ENCODE measurements at regions of chr3 and their contacts with region 1.

Region 1: DNA sequence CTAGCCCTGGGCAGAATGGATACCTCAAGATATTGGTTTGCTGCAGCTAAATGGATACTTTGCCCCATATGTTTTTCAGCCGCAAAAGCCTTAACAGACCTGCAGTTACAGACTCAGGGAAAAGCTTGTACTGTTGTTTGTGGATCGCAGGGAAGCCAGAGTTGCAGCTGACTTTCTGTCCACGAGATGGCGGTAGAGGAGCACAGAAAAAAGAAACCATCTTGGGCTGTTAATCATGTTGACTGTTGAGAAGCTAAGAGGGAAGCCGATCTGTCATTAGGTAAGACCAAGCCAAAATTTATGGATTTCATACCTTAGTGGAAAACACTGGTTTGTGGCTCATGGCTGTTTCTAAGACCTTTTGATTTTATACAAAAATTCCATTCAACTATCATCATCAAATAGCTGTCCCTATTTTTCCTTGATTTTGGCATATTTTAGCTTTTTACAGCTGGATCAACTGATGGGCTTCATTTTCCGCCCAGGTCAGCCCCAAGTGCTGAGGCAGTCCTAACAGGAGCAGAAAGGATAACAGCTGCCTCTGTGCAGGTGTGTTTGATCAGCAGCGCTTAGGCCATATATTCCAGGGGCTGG is 205.7 kb upstream of the ZPLD1 start:
- DNase-seq: peak; percentile 81
- ATAC-seq: peak; percentile 73
- H3K4me3 Mint-ChIP-seq: no peak overlapping the region
- H3K27ac Mint-ChIP-seq: no peak overlapping the region
- H3K4me1 Mint-ChIP-seq: peaks cover 14% of the 10 kb centered on the region
- H3K27me3 Mint-ChIP-seq: peaks cover 18% of the 10 kb centered on the region

Region 2: GRCh38 chr3:101803173-101803782 is 425.9 kb before region 1 on chr3:
- CTCF ChIA-PET with region 1: interaction called, 230 read pairs
- POLR2A ChIA-PET with region 1: interaction called, 3 read pairs
- DNase-seq: peak; percentile 82
- ATAC-seq: peak; percentile 99
- H3K4me3 Mint-ChIP-seq: no peak overlapping the region
- H3K27ac Mint-ChIP-seq: peak overlapping the region; percentile 39
- H3K4me1 Mint-ChIP-seq: peaks cover 11% of the 10 kb centered on the region
- H3K27me3 Mint-ChIP-seq: no peaks in the 10 kb centered on the region

Region 3: DNA sequence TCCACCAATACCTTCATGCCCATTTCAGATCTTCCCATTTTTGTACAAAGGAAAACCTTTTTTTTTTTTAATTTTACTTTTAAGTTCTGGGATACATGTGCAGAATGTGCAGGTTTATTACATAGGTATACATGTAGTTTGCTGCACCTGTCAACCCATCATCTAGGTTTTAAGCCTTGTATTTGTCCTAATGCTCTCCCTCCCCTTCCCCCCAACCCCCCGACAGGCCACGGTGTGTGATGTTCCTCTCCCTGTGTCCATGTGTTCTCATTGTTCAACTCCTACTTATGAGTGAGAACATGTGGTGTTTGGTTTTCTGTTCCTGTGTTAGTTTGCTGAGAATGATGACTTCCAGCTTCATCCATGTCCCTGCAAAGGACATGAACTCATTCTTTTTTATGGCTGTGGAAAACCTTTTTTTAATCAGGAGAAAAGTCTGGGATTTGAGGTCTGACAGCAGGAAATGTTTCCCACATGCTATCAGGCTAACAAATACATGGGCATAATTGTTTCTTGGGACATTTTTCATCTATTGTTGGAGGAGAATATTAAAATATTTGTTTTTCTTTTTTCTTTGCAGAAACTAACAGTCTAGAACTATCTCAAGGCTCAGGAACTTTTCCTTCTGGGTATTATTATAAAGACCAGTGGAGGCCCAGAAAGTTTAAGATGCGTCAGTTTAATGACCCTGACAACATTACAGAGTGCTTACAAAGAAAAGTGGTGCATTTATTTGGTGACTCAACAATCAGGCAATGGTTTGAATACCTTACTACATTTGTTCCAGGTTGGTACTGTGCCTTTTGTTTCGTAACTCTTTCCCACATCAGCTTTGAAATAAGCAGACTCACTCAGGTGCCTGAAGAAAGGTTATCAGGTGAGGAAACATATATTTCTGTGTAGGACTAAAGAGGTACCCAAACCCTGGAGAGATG is 412.7 kb before region 1 on chr3:
- CTCF ChIA-PET with region 1: interaction called, 230 read pairs
- POLR2A ChIA-PET with region 1: interaction called, 4 read pairs
- DNase-seq: no peak
- ATAC-seq: no peak
- H3K4me3 Mint-ChIP-seq: no peak overlapping the region
- H3K27ac Mint-ChIP-seq: no peak overlapping the region
- H3K4me1 Mint-ChIP-seq: peaks cover 22% of the 10 kb centered on the region
- H3K27me3 Mint-ChIP-seq: no peaks in the 10 kb centered on the region

Region 4: GRCh38 chr3:101827211-101828174 is 401.7 kb before region 1 on chr3:
- CTCF ChIA-PET with region 1: interaction called, 20 read pairs
- POLR2A ChIA-PET with region 1: interaction called, 3 read pairs
- DNase-seq: peak; percentile 89
- ATAC-seq: peak; percentile 92
- H3K4me3 Mint-ChIP-seq: peak overlapping the region; percentile 93
- H3K27ac Mint-ChIP-seq: peak overlapping the region; percentile 93
- H3K4me1 Mint-ChIP-seq: peaks cover 58% of the 10 kb centered on the region
- H3K27me3 Mint-ChIP-seq: no peaks in the 10 kb centered on the region

Region 5: GRCh38 chr3:101861212-101861788 is 367.9 kb before region 1 on chr3:
- CTCF ChIA-PET with region 1: interaction called, 11 read pairs
- POLR2A ChIA-PET with region 1: no interaction called
- DNase-seq: no peak
- ATAC-seq: no peak
- H3K4me3 Mint-ChIP-seq: no peak overlapping the region
- H3K27ac Mint-ChIP-seq: peak overlapping the region; percentile 5
- H3K4me1 Mint-ChIP-seq: peaks cover 20% of the 10 kb centered on the region
- H3K27me3 Mint-ChIP-seq: no peaks in the 10 kb centered on the region

Region 6: GRCh38 chr3:102290241-102290640 is 61.1 kb after region 1 on chr3:
- CTCF ChIA-PET with region 1: no interaction called
- POLR2A ChIA-PET with region 1: no interaction called
- DNase-seq: no peak
- ATAC-seq: no peak
- H3K4me3 Mint-ChIP-seq: no peak overlapping the region
- H3K27ac Mint-ChIP-seq: no peak overlapping the region
- H3K4me1 Mint-ChIP-seq: no peaks in the 10 kb centered on the region
- H3K27me3 Mint-ChIP-seq: peaks cover 10% of the 10 kb centered on the region

Region 7: GRCh38 chr3:102353804-102354203 is 124.6 kb after region 1 on chr3:
- CTCF ChIA-PET with region 1: no interaction called
- POLR2A ChIA-PET with region 1: no interaction called
- DNase-seq: no peak
- ATAC-seq: no peak
- H3K4me3 Mint-ChIP-seq: no peak overlapping the region
- H3K27ac Mint-ChIP-seq: no peak overlapping the region
- H3K4me1 Mint-ChIP-seq: no peaks in the 10 kb centered on the region
- H3K27me3 Mint-ChIP-seq: peaks cover 3% of the 10 kb centered on the region

Region 8: GRCh38 chr3:102415553-102415952 is 186.4 kb after region 1 on chr3:
- CTCF ChIA-PET with region 1: interaction called, 15 read pairs
- POLR2A ChIA-PET with region 1: no interaction called
- DNase-seq: no peak
- ATAC-seq: peak; percentile 55
- H3K4me3 Mint-ChIP-seq: peak overlapping the region; percentile 30
- H3K27ac Mint-ChIP-seq: no peak overlapping the region
- H3K4me1 Mint-ChIP-seq: peaks cover 9% of the 10 kb centered on the region
- H3K27me3 Mint-ChIP-seq: no peaks in the 10 kb centered on the region

Region 9: GRCh38 chr3:102536456-102536855 is 307.3 kb after region 1 on chr3:
- CTCF ChIA-PET with region 1: interaction called, 137 read pairs
- POLR2A ChIA-PET with region 1: no interaction called
- DNase-seq: no peak
- ATAC-seq: no peak
- H3K4me3 Mint-ChIP-seq: no peak overlapping the region
- H3K27ac Mint-ChIP-seq: no peak overlapping the region
- H3K4me1 Mint-ChIP-seq: peaks cover 4% of the 10 kb centered on the region
- H3K27me3 Mint-ChIP-seq: peaks cover 4% of the 10 kb centered on the region

Measured in activated CD8-positive, alpha-beta T cell treated with anti-CD3 and anti-CD28 coated beads, Interleukin-2, amount 10 ng/mL, durations not matched to agents 7 days and 5 days (primary cell).